ENCODE measurements at regions of chr11 and their contacts with region 1.

Region 1: GRCh38 chr11:65418711-65419459 is 3.7 kb upstream of the NEAT1 start:
- DNase-seq: peak; percentile 85 to 99 (median 89)
- ATAC-seq: peak; percentile 57
- H3K4me3 ChIP-seq: peak overlapping the region; percentile 43
- H3K27ac ChIP-seq: peak overlapping the region; percentile 98
- H3K4me1 ChIP-seq: peaks cover 51 to 75% of the 10 kb centered on the region in 2 experiments
- H3K27me3 ChIP-seq: no peaks in the 10 kb centered on the region
- CTCF ChIP-seq: no peak
- EP300 ChIP-seq: peak; percentile 70
- POLR2A ChIP-seq: peak; percentile 90
- RAD21 ChIP-seq: peak in 1 of 2 experiments; percentile 28; a peak in 1 of 4 replicates

Region 2: DNA sequence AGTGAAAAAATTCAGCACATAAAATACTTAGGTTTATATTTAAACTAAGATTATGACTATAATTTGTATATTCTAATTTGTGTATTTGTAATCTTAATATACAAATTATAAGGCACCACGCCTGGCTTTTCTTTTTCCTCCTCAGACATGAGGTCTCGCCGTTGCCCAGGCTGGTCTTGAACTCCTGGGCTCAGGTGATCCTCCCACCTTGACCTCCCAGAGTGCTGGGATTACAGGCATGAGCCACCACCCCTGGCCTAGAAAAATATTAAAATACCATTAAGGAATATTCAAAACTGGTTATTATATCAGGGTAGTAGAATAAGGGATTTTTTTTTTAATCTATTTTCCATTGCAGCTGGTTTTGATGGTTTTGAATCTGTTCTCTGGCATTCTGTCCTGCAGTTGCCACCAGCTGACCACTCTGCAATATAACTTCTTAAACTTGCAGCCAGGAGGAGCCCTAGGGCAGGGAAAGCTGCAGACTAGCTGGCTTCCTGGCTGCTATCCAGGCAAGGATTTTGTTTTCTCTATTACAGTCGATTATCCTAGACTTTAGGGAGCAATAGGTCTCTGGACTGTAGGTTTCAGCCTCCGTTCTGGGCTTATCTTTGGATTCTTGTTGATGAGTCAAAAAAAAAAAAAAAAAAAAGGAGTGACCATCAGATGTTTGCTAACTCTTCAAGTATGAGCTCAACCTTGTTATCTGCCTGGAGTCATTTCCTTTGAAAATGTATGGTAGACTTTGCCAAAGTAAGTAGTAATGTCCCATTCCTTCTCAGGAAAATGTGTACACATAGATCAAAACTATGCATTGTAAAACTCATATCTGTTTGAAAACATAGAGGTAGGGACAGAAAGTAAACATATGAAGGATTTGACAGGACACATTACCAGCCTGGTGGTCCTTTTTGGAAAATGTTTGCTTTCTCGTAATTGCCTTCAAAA is 143.9 kb before region 1 on chr11:
- CTCF ChIA-PET with region 1: no interaction called
- POLR2A ChIA-PET with region 1: interaction called, 17 read pairs
- in situ Hi-C with region 1: no loop called
- intact Hi-C with region 1: no loop called
- DNase-seq: peak; percentile 72 to 92 (median 77)
- ATAC-seq: peak; percentile 97
- H3K4me3 ChIP-seq: no peak overlapping the region
- H3K27ac ChIP-seq: peak overlapping the region; percentile 71
- H3K4me1 ChIP-seq: peaks cover 0 to 9% of the 10 kb centered on the region in 2 experiments; a peak in 3 of 5 replicates
- H3K27me3 ChIP-seq: no peaks in the 10 kb centered on the region
- CTCF ChIP-seq: peak; percentile 86 to 97 (median 88)
- EP300 ChIP-seq: peak; percentile 73
- POLR2A ChIP-seq: no peak
- RAD21 ChIP-seq: peak; percentile 94 to 95

Region 3: GRCh38 chr11:65366340-65366773 is 52.5 kb before region 1 on chr11:
- CTCF ChIA-PET with region 1: no interaction called
- POLR2A ChIA-PET with region 1: interaction called, 152 read pairs
- in situ Hi-C with region 1: no loop called
- intact Hi-C with region 1: loop called (anchors 2 kb)
- DNase-seq: peak; percentile 70 to 83 (median 76)
- ATAC-seq: peak; percentile 82
- H3K4me3 ChIP-seq: no peak overlapping the region
- H3K27ac ChIP-seq: peak overlapping the region; percentile 12; the same call in 2 of the 3 replicates
- H3K4me1 ChIP-seq: peaks cover 34 to 40% of the 10 kb centered on the region in 2 experiments; a peak in 4 of 5 replicates
- H3K27me3 ChIP-seq: no peaks in the 10 kb centered on the region
- CTCF ChIP-seq: peak; percentile 74 to 93 (median 78)
- EP300 ChIP-seq: no peak
- POLR2A ChIP-seq: no peak
- RAD21 ChIP-seq: peak; percentile 90 to 93

Region 4: DNA sequence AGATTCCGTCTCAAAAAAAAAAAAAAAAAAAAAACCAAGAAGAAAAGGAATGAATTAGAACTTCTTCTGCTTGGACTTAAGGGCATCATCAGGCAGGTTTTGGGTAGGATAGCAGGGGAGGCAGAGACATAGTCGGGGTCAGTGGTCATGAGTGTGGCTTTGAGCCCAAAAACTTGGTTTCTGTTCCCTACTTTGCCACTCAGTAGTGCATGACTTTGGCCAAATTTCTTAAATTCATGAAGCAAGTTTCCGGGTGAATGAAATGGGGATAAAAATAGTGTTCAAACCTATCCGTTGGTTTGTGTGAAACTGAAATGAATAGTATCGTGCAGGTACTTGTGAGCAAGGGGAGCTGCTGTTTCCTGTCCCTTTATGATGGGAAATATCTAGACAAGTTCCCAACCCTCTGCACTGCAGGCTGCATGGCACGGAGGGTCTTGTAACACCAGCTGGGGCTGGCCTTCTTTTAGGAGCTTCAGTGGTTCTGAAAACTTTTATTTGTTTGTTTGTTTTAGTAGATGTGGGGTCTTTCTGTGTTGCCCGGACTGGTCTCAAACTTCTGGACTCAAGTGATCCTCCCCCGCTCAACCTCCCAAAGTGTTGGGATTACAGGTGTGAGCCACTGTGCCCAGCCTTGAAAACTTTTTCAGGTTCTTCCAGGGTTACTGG is 22.1 kb after region 1 on chr11:
- CTCF ChIA-PET with region 1: no interaction called
- POLR2A ChIA-PET with region 1: interaction called, 93 read pairs
- in situ Hi-C with region 1: no loop called
- intact Hi-C with region 1: no loop called
- DNase-seq: peak in 1 of 4 experiments; percentile 20
- ATAC-seq: no peak
- H3K4me3 ChIP-seq: no peak overlapping the region
- H3K27ac ChIP-seq: no peak overlapping the region
- H3K4me1 ChIP-seq: peaks cover 12 to 45% of the 10 kb centered on the region in 2 experiments; a peak in 4 of 5 replicates
- H3K27me3 ChIP-seq: no peaks in the 10 kb centered on the region
- CTCF ChIP-seq: no peak
- EP300 ChIP-seq: no peak
- POLR2A ChIP-seq: peak; percentile 61
- RAD21 ChIP-seq: no peak

Region 5: DNA sequence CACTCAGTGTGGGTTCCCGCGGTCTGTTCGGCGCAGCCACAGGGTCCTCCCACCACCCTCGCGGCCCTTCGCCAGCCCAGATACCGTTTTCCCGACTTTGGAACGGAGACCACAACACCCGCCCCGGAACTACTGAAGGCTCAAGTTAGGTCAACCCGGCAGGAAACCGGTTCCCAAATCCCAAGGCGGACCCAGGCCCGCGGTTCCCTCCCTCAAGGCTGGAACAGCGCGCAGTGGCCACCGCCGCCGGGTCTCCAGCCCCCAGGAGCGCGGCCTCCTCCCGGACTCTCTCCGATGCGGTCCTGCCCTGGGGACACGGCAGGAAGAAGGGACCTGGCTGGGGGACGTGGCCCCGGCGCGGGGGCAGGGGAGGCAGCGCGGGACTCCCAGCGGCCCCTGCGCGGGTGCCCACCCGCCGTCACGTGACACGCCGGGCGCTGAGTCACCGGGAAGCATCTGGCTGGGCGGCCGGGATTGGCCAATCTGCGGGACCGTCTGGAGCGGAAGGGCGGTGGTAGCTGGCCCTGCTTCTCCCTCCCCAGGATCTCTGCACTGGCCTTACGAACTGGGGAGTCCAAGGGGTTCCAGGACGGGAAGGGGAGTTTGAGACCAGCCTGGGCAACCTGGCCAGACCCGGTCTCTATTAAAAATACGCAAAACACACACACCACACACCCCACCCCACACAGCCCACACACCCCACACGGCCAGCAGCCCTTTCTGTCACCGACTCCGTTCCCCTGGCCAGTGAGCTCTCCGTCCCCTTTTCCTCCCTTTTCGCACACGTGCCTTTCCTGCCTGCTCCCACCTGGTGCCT is 58.5 kb after region 1 on chr11:
- CTCF ChIA-PET with region 1: no interaction called
- POLR2A ChIA-PET with region 1: interaction called, 704 read pairs
- in situ Hi-C with region 1: no loop called
- intact Hi-C with region 1: no loop called
- DNase-seq: peak; percentile 95 to 98 (median 96)
- ATAC-seq: peak; percentile 80
- H3K4me3 ChIP-seq: peak overlapping the region; percentile 93
- H3K27ac ChIP-seq: peak overlapping the region; percentile 99
- H3K4me1 ChIP-seq: peaks cover 36 to 59% of the 10 kb centered on the region in 2 experiments
- H3K27me3 ChIP-seq: no peaks in the 10 kb centered on the region
- CTCF ChIP-seq: no peak
- EP300 ChIP-seq: peak; percentile 70
- POLR2A ChIP-seq: peak; percentile 92
- RAD21 ChIP-seq: peak in 1 of 2 experiments; percentile 5; a peak in 1 of 4 replicates

Region 6: DNA sequence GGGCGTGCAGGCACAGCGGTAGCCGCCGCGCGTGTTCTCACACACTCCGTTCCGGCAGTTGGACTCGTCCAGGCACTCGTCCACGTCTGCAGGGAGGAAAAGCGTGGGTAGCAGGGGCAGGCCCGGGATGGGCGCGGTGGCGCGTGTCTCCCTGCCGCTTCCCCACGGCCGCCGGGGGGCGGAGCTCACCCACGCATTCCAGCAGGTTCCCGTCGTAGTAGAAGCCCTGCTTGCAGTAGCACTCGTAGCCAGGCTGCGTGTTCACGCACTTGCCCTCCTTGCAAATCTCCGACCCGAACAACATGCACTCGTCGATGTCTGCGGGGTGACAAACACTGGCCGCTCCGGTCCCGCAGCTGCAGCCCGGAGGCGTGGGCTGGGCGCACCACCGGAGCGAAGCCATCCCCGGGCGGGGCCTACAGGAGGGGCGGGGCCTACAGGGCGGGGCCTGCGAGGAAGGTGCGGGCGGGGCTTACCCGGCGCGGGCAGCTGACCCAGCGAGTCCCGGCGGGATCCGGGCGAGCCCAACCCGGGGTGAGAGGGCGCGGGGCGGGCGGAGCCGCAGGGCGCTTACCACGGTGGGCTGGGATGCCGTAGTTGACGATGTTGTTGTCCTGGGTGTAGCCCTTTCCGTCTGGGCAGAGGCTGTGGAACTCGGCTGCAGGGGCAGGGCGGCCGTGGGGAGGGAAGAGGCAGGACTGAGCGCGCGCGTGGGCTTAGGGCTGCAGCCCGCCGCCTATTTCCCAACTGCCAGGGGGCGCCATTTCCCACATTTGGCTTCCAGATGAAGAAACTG is 121.6 kb after region 1 on chr11:
- CTCF ChIA-PET with region 1: no interaction called
- POLR2A ChIA-PET with region 1: interaction called, 15 read pairs
- in situ Hi-C with region 1: no loop called
- intact Hi-C with region 1: no loop called
- DNase-seq: peak; percentile 92 to 97 (median 94)
- ATAC-seq: peak; percentile 97
- H3K4me3 ChIP-seq: peak overlapping the region; percentile 76
- H3K27ac ChIP-seq: peak overlapping the region; percentile 78
- H3K4me1 ChIP-seq: peaks cover 9 to 48% of the 10 kb centered on the region in 2 experiments
- H3K27me3 ChIP-seq: no peaks in the 10 kb centered on the region
- CTCF ChIP-seq: peak; percentile 88 to 94 (median 92)
- EP300 ChIP-seq: no peak
- POLR2A ChIP-seq: peak; percentile 69
- RAD21 ChIP-seq: peak; percentile 92 to 96

Region 7: DNA sequence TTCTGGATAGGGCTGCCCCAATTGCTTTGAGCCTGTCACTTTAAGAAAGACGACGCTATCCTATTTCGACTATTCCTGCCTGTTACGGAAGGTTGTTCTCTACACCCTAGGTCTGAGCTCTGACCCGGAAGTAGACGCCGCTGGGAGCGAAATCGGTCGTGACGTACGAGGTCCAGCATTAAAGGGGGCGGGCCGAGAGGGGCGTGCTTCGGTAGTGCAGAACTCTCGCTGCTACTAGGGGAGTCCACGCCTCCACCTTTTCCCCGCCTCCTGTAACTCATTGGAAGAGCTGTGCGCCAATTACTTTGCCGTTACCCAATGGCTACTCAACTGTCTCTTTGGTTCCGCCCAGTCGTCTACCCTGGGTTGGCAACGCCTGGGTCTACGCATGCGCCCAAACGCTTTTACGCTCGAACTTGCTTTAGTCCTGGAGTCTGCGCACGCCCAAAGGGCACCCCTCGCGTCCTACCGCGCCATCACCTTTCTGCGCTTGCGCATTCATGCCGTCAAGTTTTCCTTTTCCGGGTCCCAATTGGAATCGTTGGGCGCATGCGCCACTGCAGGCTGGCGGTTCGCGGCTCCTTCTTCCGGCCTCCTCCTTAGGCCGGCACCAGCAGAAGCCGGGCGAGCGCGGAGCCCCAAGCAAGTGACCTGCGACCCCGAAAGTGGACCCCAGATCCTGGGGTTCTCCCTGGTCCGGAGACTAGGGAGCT is 196.5 kb after region 1 on chr11 and contains the start of gene PCNX3:
- CTCF ChIA-PET with region 1: no interaction called
- POLR2A ChIA-PET with region 1: interaction called, 11 read pairs
- in situ Hi-C with region 1: no loop called
- intact Hi-C with region 1: no loop called
- DNase-seq: peak; percentile 97 to 100 (median 99)
- ATAC-seq: peak; percentile 91
- H3K4me3 ChIP-seq: peak within 1 kb of the TSS; percentile 94
- H3K27ac ChIP-seq: peak within 1 kb of the TSS; percentile 74
- H3K4me1 ChIP-seq: peaks cover 28 to 78% of the 10 kb centered on the region in 2 experiments
- H3K27me3 ChIP-seq: no peaks in the 10 kb centered on the region
- CTCF ChIP-seq: no peak
- EP300 ChIP-seq: peak; percentile 37; the same call in 1 of the 2 replicates
- POLR2A ChIP-seq: peak; percentile 84
- RAD21 ChIP-seq: no peak
- polyA plus RNA-seq, gene PCNX3: 0.11 to 0.29 TPM

Region 8: DNA sequence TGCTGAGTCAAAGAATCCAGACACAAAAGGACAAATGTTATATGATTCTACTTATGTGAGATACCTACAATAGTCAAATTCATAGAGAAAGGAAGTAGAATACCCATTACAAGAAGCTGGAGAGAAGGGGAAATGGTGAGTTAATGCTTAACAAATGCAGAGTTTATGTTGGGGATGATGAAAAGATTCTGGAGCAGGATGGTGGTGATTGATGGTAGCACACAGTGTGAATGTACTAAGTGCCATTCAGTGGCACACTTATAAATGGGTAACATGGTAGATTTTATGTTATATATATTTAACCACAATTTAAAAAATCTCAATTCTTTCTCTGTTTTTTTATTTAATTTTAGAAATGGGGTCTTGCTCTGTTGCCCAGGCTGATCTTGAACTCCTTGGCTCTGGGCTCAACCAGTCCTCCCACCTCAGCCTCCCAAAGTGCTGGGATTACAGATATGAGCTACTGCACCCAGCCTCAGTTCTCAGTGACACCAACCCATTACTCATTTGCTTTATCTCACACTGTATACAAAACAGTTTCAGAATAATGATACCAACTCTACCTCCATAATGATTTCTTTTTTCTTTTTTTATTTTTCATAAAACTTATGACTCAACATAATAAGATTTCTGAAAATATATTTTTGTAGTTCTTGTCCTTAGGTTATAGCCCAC is 253.4 kb after region 1 on chr11:
- CTCF ChIA-PET with region 1: no interaction called
- POLR2A ChIA-PET with region 1: no interaction called
- in situ Hi-C with region 1: no loop called
- intact Hi-C with region 1: no loop called
- DNase-seq: no peak
- ATAC-seq: no peak
- H3K4me3 ChIP-seq: no peak overlapping the region
- H3K27ac ChIP-seq: no peak overlapping the region
- H3K4me1 ChIP-seq: no peaks in the 10 kb centered on the region
- H3K27me3 ChIP-seq: no peaks in the 10 kb centered on the region
- CTCF ChIP-seq: no peak
- EP300 ChIP-seq: no peak
- POLR2A ChIP-seq: no peak
- RAD21 ChIP-seq: no peak